Natural killer cell (primary cell): ENCODE measurements at regions of chr13 and their contacts with region 1.

Region 1: DNA sequence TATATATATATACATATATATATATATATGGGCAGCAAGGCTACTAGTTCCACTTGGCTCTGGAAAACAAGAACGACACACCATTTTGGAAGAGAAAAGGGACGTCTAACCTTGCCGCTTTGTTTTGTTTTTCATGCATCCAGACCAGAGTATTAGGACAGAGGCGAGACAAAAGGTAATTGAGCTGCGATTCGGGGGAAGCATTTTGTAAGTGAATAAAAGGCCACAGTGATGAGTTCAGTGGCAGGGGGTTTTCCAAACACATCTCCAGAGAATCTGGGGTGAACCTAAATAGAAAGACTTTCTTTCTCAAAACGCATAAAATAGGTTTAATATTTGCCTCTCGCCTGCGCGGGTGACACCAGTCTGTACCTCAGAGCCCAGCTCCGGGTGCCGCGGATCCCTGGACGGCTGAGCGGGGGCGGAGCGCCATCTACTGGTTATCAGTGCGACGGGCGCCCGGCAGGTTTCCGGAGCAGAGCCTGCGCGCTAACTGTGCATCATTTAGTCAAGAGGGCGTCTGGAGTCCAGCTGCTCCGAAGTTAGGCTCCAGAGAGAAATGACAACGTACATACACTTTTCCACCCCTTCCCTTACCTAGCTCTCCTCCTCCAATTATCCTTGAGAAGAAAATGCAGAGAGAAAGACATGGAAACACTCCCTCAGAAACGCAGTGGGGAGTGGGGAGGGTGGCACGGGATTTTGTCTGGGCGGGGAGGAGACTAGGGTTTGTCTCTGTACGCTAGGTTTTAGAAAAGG is 262.3 kb downstream of the TBC1D4 start:
- DNase-seq: peak; percentile 76 to 87
- ATAC-seq: peak; percentile 93 to 100 (median 99)
- H3K4me3 ChIP-seq: no peak overlapping the region
- H3K4me3 Mint-ChIP-seq: no peak overlapping the region
- H3K27ac ChIP-seq: no peak overlapping the region
- H3K27ac Mint-ChIP-seq: no peak overlapping the region
- H3K4me1 ChIP-seq: peaks cover 5% of the 10 kb centered on the region
- H3K4me1 Mint-ChIP-seq: peaks cover 7% of the 10 kb centered on the region in 2 donors
- H3K27me3 ChIP-seq: peaks cover 3% of the 10 kb centered on the region
- H3K27me3 Mint-ChIP-seq: peaks cover 25 to 41% of the 10 kb centered on the region in 2 donors
- CTCF ChIP-seq: peak; percentile 88

Region 2: GRCh38 chr13:73754727-73755292 is 1464.8 kb before region 1 on chr13:
- intact Hi-C with region 1: loop called (anchors 1 kb)
- DNase-seq: peak in 1 of 2 donors; percentile 80
- ATAC-seq: peak; percentile 41 to 70 (median 62)
- H3K4me3 ChIP-seq: no peak overlapping the region
- H3K4me3 Mint-ChIP-seq: no peak overlapping the region
- H3K27ac ChIP-seq: no peak overlapping the region
- H3K27ac Mint-ChIP-seq: peak overlapping the region; percentile 8 to 44
- H3K4me1 ChIP-seq: peaks cover 5% of the 10 kb centered on the region
- H3K4me1 Mint-ChIP-seq: peaks cover 31 to 35% of the 10 kb centered on the region in 2 donors
- H3K27me3 ChIP-seq: no peaks in the 10 kb centered on the region
- H3K27me3 Mint-ChIP-seq: no peaks in the 10 kb centered on the region
- CTCF ChIP-seq: peak; percentile 80

Region 3: GRCh38 chr13:73835138-73835721 is 1384.4 kb before region 1 on chr13:
- intact Hi-C with region 1: loop called (anchors 5 kb)
- DNase-seq: peak in 1 of 2 donors; percentile 70
- ATAC-seq: peak in 2 of 3 donors; percentile 59 to 60
- H3K4me3 ChIP-seq: no peak overlapping the region
- H3K4me3 Mint-ChIP-seq: no peak overlapping the region
- H3K27ac ChIP-seq: no peak overlapping the region
- H3K27ac Mint-ChIP-seq: no peak overlapping the region
- H3K4me1 ChIP-seq: no peaks in the 10 kb centered on the region
- H3K4me1 Mint-ChIP-seq: peaks cover 29 to 43% of the 10 kb centered on the region in 2 donors
- H3K27me3 ChIP-seq: no peaks in the 10 kb centered on the region
- H3K27me3 Mint-ChIP-seq: no peaks in the 10 kb centered on the region
- CTCF ChIP-seq: peak; percentile 87

Region 4: GRCh38 chr13:74683411-74683810 is 536.2 kb before region 1 on chr13:
- intact Hi-C with region 1: loop called (anchors 5 kb)
- DNase-seq: peak in 1 of 2 donors; percentile 12
- ATAC-seq: no peak
- H3K4me3 ChIP-seq: no peak overlapping the region
- H3K4me3 Mint-ChIP-seq: no peak overlapping the region
- H3K27ac ChIP-seq: no peak overlapping the region
- H3K27ac Mint-ChIP-seq: no peak overlapping the region
- H3K4me1 ChIP-seq: no peaks in the 10 kb centered on the region
- H3K4me1 Mint-ChIP-seq: no peaks in the 10 kb centered on the region
- H3K27me3 ChIP-seq: no peaks in the 10 kb centered on the region
- H3K27me3 Mint-ChIP-seq: peaks cover 0 to 4% of the 10 kb centered on the region in 2 donors
- CTCF ChIP-seq: no peak

Region 5: GRCh38 chr13:75161804-75162203 is 57.9 kb before region 1 on chr13:
- intact Hi-C with region 1: no loop called
- DNase-seq: no peak
- ATAC-seq: no peak
- H3K4me3 ChIP-seq: no peak overlapping the region
- H3K4me3 Mint-ChIP-seq: no peak overlapping the region
- H3K27ac ChIP-seq: no peak overlapping the region
- H3K27ac Mint-ChIP-seq: no peak overlapping the region
- H3K4me1 ChIP-seq: no peaks in the 10 kb centered on the region
- H3K4me1 Mint-ChIP-seq: no peaks in the 10 kb centered on the region
- H3K27me3 ChIP-seq: no peaks in the 10 kb centered on the region
- H3K27me3 Mint-ChIP-seq: peaks cover 0 to 3% of the 10 kb centered on the region in 2 donors
- CTCF ChIP-seq: no peak